RWPE1 (cell line): ENCODE measurements at regions of chr1 and their contacts with region 1.

Region 1: GRCh38 chr1:181189691-181190363 is 101.3 kb downstream of the IER5 start:
- DNase-seq: peak; percentile 85
- H3K27ac ChIP-seq: no peak overlapping the region
- CTCF ChIP-seq: peak; percentile 98

Region 2: GRCh38 chr1:181284978-181285377 is 95.2 kb after region 1 on chr1:
- CTCF ChIA-PET with region 1: no interaction called
- POLR2A ChIA-PET with region 1: no interaction called
- DNase-seq: no peak
- H3K27ac ChIP-seq: no peak overlapping the region
- CTCF ChIP-seq: no peak

Region 3: GRCh38 chr1:181424786-181425403 is 235.1 kb after region 1 on chr1:
- CTCF ChIA-PET with region 1: interaction called, 64 read pairs
- POLR2A ChIA-PET with region 1: no interaction called
- DNase-seq: peak; percentile 65
- H3K27ac ChIP-seq: no peak overlapping the region
- CTCF ChIP-seq: peak; percentile 96